ENCODE measurements at regions of chr17 and their contacts with region 1.

Region 1: DNA sequence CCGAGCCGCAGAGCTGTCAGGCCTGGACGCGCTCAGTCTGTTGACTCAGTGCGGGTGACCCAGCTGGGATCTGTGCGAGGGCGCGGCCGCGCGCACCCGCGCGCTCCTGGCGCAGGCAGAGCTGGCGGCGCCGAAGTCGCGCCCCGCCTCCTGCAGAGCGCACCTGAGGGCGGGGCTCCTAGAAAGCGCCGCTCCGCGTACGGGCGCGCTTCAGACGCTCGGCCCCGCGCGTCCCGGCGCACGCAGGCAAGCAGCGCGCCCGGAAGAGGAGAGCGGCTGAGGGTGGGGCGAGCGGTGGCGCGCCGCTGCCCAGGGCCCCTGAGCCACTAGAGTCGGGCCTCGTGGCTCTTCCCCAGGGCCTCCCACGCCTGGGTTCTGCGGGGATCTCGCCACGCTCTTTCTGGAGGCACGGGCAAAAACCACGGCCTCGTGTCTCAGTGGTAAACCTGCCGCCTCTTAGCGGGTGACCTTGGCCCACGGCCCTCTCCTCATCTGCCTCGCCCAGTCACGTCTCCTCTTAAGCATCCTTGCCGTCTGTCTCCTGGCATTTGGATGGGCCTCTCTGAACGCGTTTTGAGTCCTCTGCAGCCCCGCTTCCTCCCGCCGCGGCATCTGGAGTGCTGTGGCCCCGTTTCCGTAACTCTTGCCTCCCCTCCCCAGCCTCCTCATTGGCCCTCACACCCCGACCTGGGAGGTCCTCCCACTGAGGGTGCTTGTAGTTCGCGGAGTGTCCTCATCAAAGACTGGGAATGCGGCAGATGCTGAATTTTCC is at the start of gene ABCA5:
- DNase-seq: peak; percentile 80 to 94 (median 89)
- H3K4me3 ChIP-seq: peak within 1 kb of the TSS; percentile 87
- H3K4me3 Mint-ChIP-seq: peak within 1 kb of the TSS; percentile 93 to 99 (median 95)
- H3K27ac ChIP-seq: peak within 1 kb of the TSS; percentile 72
- H3K27ac Mint-ChIP-seq: peak within 1 kb of the TSS; percentile 93 to 100 (median 98)
- H3K4me1 ChIP-seq: peaks cover 15% of the 10 kb centered on the region
- H3K4me1 Mint-ChIP-seq: peaks cover 29 to 42% (median 37%) of the 10 kb centered on the region in 3 donors
- H3K27me3 ChIP-seq: no peaks in the 10 kb centered on the region
- H3K27me3 Mint-ChIP-seq: peaks cover 5 to 20% of the 10 kb centered on the region in 2 donors
- total RNA-seq, gene ABCA5: 14.8 to 15.4 TPM

Region 2: GRCh38 chr17:69414408-69415274 is 87.4 kb after region 1 on chr17 and contains the start of gene MAP2K6:
- CTCF ChIA-PET with region 1: interaction called, 8 read pairs
- POLR2A ChIA-PET with region 1: interaction called, 16 read pairs
- DNase-seq: peak; percentile 67 to 87 (median 76)
- H3K4me3 ChIP-seq: peak within 1 kb of the TSS; percentile 74
- H3K4me3 Mint-ChIP-seq: no peak within 1 kb of the TSS
- H3K27ac ChIP-seq: no peak within 1 kb of the TSS
- H3K27ac Mint-ChIP-seq: peak within 1 kb of the TSS in 1 of 8 donors; percentile 31
- H3K4me1 ChIP-seq: peaks cover 43% of the 10 kb centered on the region
- H3K4me1 Mint-ChIP-seq: peaks cover 0 to 17% (median 0%) of the 10 kb centered on the region in 3 donors
- H3K27me3 ChIP-seq: no peaks in the 10 kb centered on the region
- H3K27me3 Mint-ChIP-seq: no peaks in the 10 kb centered on the region
- total RNA-seq, gene MAP2K6: 1.9 to 2.5 TPM